Activated CD4-positive, alpha-beta memory T cell treated with anti-CD3 and anti-CD28 coated beads, Interleukin-2, amount 10 ng/mL, durations not matched to agents 7 days and 5 days (primary cell): ENCODE measurements at regions of chr17 and their contacts with region 1.

Region 1: GRCh38 chr17:7336240-7337175 is at the start of gene ACAP1:
- DNase-seq: peak; percentile 93
- H3K4me3 Mint-ChIP-seq: peak within 1 kb of the TSS; percentile 91
- H3K27ac Mint-ChIP-seq: peak within 1 kb of the TSS; percentile 91
- H3K4me1 Mint-ChIP-seq: peaks cover 59% of the 10 kb centered on the region
- H3K27me3 Mint-ChIP-seq: no peaks in the 10 kb centered on the region
- total RNA-seq, gene ACAP1: 682 to 709 TPM

Region 2: DNA sequence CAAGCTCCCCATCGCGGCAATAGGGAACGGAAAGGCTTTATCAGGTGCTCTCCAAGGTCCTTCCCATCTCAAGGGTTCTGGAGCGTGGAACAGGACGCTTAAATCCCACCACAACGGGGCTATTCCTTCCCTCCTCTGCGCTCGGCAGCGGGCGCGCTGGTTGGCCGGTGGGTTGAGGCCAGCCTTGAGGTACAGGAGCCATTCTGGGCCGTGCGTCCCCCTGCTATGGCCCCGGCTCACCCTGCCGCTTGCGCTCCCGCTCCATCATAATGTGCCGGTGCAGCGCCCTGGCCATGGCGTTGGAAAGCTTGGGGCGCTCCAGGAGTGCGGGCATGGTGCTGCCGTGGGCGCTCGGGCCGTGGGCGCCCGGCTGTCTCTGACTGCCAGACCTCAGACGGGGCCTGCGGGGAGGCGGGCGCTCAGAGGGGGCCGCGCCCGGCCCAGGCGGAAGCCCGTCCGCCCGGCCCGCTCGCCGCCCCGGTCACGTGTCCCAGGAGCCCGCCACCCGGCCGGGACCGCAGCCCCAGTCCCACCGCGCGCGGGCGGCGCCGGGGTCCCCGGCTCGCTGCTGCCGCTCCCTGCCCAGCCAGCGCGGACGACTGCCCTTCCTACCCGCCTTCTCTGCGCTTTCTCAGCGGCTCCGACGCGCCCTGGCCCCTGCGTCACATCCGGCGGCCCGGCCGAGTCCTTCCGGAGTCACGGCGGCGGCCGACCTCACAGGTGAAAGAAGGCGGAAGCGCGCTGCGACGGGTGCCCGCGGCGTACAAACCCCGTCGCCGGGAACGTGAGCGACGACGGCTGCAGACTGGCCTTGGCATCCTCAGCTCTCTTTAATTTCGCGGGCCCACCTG is 21.6 kb before region 1 on chr17 and contains the start of gene GPS2:
- CTCF ChIA-PET with region 1: interaction called, 14 read pairs
- POLR2A ChIA-PET with region 1: interaction called, 109 read pairs
- DNase-seq: peak; percentile 95
- H3K4me3 Mint-ChIP-seq: peak within 1 kb of the TSS; percentile 93
- H3K27ac Mint-ChIP-seq: peak within 1 kb of the TSS; percentile 91
- H3K4me1 Mint-ChIP-seq: peaks cover 58% of the 10 kb centered on the region
- H3K27me3 Mint-ChIP-seq: no peaks in the 10 kb centered on the region
- total RNA-seq, gene GPS2: 69.8 to 74.7 TPM

Region 3: DNA sequence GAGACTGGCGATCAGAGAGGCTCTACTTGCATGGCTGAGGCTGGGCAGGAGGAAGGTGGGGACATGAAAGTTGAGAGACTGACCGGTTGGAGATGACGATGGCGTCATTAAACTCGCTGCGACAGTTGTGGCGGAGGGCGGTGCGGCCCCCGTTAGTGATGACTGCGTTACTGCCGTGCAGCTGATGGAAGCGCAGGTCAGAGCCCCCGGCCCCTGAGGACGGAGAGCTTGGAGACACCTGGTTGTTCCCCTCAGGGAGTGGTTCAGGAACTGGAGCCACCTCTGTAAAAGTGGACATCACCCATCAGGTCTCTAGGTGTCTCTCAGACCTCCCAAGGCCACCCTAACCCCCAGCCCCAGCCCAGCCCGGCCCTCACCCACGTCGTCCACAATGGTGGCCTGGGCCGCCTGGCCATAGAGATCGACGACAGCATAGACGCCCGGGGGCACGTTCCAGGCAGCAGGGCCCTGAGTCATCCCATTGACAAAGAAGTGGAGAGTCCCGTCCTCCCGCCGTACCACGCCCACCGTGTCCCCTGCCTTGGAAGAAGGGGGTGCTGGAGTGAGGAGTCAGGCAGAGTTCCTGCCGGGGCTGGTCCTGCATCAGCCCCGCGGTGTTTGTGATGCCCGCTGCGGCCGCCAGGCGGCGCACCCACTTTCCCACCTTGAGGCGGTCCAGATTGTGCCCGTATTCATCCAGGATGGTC is 12.6 kb before region 1 on chr17:
- CTCF ChIA-PET with region 1: interaction called, 48 read pairs
- POLR2A ChIA-PET with region 1: interaction called, 109 read pairs
- DNase-seq: peak; percentile 71
- H3K4me3 Mint-ChIP-seq: no peak overlapping the region
- H3K27ac Mint-ChIP-seq: no peak overlapping the region
- H3K4me1 Mint-ChIP-seq: peaks cover 22% of the 10 kb centered on the region
- H3K27me3 Mint-ChIP-seq: no peaks in the 10 kb centered on the region

Region 4: GRCh38 chr17:7413346-7413985 is 77.0 kb after region 1 on chr17:
- CTCF ChIA-PET with region 1: no interaction called
- POLR2A ChIA-PET with region 1: no interaction called
- DNase-seq: no peak
- H3K4me3 Mint-ChIP-seq: no peak overlapping the region
- H3K27ac Mint-ChIP-seq: no peak overlapping the region
- H3K4me1 Mint-ChIP-seq: peaks cover 4% of the 10 kb centered on the region
- H3K27me3 Mint-ChIP-seq: peaks cover 5% of the 10 kb centered on the region

Region 5: DNA sequence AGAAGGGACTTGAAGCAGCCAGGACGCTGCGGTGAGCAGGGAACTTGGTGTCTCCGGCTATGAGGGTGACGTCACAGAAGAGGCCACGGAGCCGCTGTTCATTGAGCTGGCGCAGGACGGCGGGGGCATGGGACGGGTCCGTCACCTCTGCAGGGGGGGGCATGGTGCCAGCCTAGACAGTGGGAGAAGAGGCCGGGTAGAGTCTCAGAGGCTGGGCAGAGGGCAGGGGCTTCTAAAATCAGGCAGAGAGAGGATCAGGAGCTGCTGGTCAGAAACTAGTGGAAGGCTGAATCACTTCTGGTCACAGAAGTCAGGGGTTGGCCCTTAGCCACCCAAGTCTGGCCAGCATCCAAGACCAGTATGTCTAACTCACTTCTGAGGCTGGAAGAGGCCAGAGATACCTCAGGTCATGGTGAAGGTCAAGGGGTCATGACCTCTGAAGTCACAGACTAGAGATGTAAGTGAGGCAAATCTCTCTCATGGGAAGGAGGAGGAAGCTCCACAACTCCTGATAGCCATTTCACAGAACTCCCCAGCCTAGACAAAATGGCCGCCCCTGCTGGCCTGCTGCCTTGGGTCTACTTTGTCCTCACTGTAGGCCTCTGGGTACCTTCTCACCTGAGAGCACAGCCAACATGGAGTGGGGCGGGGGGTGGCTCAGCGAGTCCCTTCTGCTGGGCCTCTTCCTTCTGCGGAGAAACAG is 130.3 kb after region 1 on chr17:
- CTCF ChIA-PET with region 1: no interaction called
- POLR2A ChIA-PET with region 1: no interaction called
- DNase-seq: no peak
- H3K4me3 Mint-ChIP-seq: no peak overlapping the region
- H3K27ac Mint-ChIP-seq: no peak overlapping the region
- H3K4me1 Mint-ChIP-seq: peaks cover 8% of the 10 kb centered on the region
- H3K27me3 Mint-ChIP-seq: no peaks in the 10 kb centered on the region